Activated B cell treated with CpG ODN at 0.5 μM for 24 hours (primary cell): ENCODE measurements at regions of chr10 and their contacts with region 1.

Region 1: DNA sequence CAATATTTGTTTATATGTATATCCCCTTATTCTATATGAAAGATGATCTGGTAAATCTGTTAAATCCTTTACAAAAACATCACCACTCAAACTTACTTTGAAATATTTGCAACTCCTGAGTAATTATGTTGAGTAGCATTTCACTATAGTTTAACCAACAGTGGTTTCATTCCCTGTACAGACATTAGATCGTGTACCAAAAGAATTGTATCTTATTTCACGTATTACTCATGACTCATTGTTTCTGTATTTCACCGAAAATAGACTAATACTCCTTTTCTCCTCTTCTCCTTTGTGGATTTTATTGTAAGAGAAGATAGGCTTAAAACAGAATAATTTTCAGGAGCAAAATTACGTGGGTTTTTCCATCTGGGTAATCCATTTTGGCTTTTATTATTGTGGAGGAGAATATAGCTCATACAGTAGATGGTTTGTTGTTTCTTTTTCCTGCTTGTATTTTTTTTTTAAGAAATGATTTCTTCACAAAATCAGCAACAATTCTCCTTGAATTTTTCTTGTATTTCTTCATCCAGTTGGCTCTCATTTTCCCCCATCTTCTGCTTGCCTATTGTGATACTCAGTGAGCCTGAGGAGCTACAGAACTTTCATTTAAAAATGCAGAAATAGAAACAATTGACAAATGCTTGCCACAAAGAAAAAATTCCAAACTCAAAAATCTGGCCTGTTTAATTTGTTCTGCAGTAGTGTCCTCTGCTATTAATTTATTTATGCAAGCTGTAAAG is 90.6 kb upstream of the OIT3 start:
- DNase-seq: no peak
- ATAC-seq: no peak
- H3K4me3 Mint-ChIP-seq: no peak overlapping the region
- H3K27ac Mint-ChIP-seq: no peak overlapping the region
- H3K4me1 Mint-ChIP-seq: peaks cover 5% of the 10 kb centered on the region
- H3K27me3 Mint-ChIP-seq: no peaks in the 10 kb centered on the region
- CTCF ChIP-seq: no peak

Region 2: GRCh38 chr10:72736176-72736827 is 66.6 kb before region 1 on chr10:
- CTCF ChIA-PET with region 1: no interaction called
- POLR2A ChIA-PET with region 1: no interaction called
- intact Hi-C with region 1: no loop called
- DNase-seq: no peak
- ATAC-seq: no peak
- H3K4me3 Mint-ChIP-seq: no peak overlapping the region
- H3K27ac Mint-ChIP-seq: no peak overlapping the region
- H3K4me1 Mint-ChIP-seq: peaks cover 23% of the 10 kb centered on the region
- H3K27me3 Mint-ChIP-seq: no peaks in the 10 kb centered on the region
- CTCF ChIP-seq: no peak

Region 3: DNA sequence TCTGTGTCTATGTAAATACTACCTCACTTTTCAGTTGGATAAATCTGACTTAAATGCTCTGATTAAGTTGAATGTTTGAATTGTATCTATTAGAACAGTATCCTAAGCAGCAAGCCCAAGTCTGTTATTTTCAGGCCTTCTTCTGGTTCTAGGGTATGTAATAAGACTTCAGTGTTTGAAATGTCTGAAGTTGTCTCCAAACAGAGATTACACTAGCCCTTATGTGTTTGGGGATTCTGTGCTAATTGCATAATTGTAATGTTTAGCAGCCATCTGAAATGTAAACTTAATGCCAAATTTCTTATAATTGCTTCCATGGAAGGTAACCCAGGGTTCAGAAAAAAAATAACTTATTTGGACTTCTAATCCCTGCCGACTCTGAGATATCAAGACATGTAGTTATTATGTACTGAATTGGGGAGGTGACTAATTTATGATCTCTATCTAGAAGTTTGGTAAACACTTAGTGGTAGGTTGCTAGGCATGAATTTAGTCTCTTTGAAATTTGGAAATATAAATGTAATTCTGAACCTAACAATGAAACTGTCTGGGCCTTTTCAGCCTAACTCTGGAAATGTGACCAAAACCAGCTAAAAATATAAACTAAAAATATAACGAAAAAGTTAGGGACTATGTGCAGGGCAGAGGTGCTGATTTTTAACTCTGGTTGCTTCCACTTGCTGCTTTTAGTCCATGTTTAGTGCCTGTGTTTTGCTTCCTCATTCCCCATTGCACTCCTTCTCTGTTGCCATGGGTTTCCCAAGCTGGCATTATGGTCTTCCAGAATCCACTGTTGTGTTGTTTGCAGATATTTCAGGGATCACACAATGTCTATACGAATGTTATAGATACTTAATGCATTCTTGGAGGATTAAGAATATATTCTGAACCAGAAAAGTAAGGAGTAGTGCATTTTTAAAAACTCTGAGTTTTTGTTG is 56.2 kb before region 1 on chr10:
- CTCF ChIA-PET with region 1: no interaction called
- POLR2A ChIA-PET with region 1: no interaction called
- intact Hi-C with region 1: loop called (anchors 5 kb)
- DNase-seq: no peak
- ATAC-seq: no peak
- H3K4me3 Mint-ChIP-seq: no peak overlapping the region
- H3K27ac Mint-ChIP-seq: no peak overlapping the region
- H3K4me1 Mint-ChIP-seq: no peaks in the 10 kb centered on the region
- H3K27me3 Mint-ChIP-seq: no peaks in the 10 kb centered on the region
- CTCF ChIP-seq: no peak